ENCODE measurements at regions of chr5 and their contacts with region 1.

Region 1: GRCh38 chr5:110441035-110441434 is 285.4 kb downstream of the TMEM232 start:
- DNase-seq: peak; percentile 11
- ATAC-seq: no peak
- H3K4me3 Mint-ChIP-seq: no peak overlapping the region
- H3K27ac Mint-ChIP-seq: no peak overlapping the region
- H3K4me1 Mint-ChIP-seq: no peaks in the 10 kb centered on the region
- H3K27me3 Mint-ChIP-seq: peaks cover 4% of the 10 kb centered on the region

Region 2: GRCh38 chr5:110588286-110588965 is 147.4 kb after region 1 on chr5:
- CTCF ChIA-PET with region 1: interaction called, 3 read pairs
- POLR2A ChIA-PET with region 1: no interaction called
- intact Hi-C with region 1: loop called in 1 of 2 experiments (anchors 5 kb)
- DNase-seq: no peak
- ATAC-seq: no peak
- H3K4me3 Mint-ChIP-seq: no peak overlapping the region
- H3K27ac Mint-ChIP-seq: no peak overlapping the region
- H3K4me1 Mint-ChIP-seq: no peaks in the 10 kb centered on the region
- H3K27me3 Mint-ChIP-seq: peaks cover 4% of the 10 kb centered on the region

Region 3: DNA sequence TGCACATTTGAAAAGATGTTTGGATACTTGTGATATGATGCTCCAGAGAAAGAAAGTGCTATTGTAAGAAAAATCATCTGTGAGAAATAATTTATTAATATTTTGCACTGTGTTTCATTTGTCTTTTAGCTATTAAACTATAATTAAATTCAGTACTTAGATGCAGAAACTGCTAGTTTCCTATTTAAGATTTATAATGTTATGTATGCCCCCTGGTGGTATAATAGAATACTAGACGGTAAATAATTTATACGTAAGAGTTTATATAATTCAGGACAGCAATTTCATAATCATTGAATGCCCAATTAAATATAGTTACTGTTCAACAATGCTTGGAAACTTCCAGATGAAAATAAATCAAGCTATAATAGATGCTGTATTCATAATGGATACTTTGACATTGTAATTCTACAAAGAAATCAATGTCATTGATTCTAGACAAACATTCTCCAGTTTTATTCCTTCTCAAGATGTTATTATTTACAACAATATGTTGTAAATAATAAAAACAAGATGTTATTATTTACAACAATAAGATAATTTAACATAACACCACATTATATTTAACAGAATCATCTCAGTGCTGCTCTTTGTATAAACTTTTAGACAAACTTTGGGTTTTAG is 184.5 kb after region 1 on chr5:
- CTCF ChIA-PET with region 1: interaction called, 4 read pairs
- POLR2A ChIA-PET with region 1: no interaction called
- intact Hi-C with region 1: loop called (anchors 1 to 10 kb)
- DNase-seq: no peak
- ATAC-seq: no peak
- H3K4me3 Mint-ChIP-seq: no peak overlapping the region
- H3K27ac Mint-ChIP-seq: no peak overlapping the region
- H3K4me1 Mint-ChIP-seq: no peaks in the 10 kb centered on the region
- H3K27me3 Mint-ChIP-seq: no peaks in the 10 kb centered on the region